T-cell (primary cell): ENCODE measurements at regions of chrX and their contacts with region 1.

Region 1: GRCh38 chrX:119706616-119707015 is 13.6 kb upstream of the SEPTIN6 start:
- DNase-seq: no peak
- ATAC-seq: no peak
- H3K4me3 ChIP-seq: no peak overlapping the region
- H3K4me3 Mint-ChIP-seq: no peak overlapping the region
- H3K27ac ChIP-seq: no peak overlapping the region
- H3K27ac Mint-ChIP-seq: no peak overlapping the region
- H3K4me1 ChIP-seq: no peaks in the 10 kb centered on the region
- H3K4me1 Mint-ChIP-seq: peaks cover 0 to 14% (median 2%) of the 10 kb centered on the region in 3 donors
- H3K27me3 ChIP-seq: no peaks in the 10 kb centered on the region
- H3K27me3 Mint-ChIP-seq: peaks cover 0 to 6% of the 10 kb centered on the region in 2 donors

Region 2: GRCh38 chrX:119638725-119639471 is 67.7 kb before region 1 on chrX:
- CTCF ChIA-PET with region 1: no interaction called
- POLR2A ChIA-PET with region 1: interaction called in 1 of 2 experiments, 12 read pairs
- DNase-seq: no peak
- ATAC-seq: peak in 2 of 4 experiments; percentile 11 to 23
- H3K4me3 ChIP-seq: no peak overlapping the region
- H3K4me3 Mint-ChIP-seq: no peak overlapping the region
- H3K27ac ChIP-seq: no peak overlapping the region
- H3K27ac Mint-ChIP-seq: peak overlapping the region; percentile 43 to 50
- H3K4me1 ChIP-seq: peaks cover 0 to 4% of the 10 kb centered on the region in 2 experiments
- H3K4me1 Mint-ChIP-seq: peaks cover 22 to 40% (median 32%) of the 10 kb centered on the region in 3 donors
- H3K27me3 ChIP-seq: no peaks in the 10 kb centered on the region
- H3K27me3 Mint-ChIP-seq: no peaks in the 10 kb centered on the region

Region 3: GRCh38 chrX:120428309-120428708 is 721.7 kb after region 1 on chrX:
- CTCF ChIA-PET with region 1: no interaction called
- POLR2A ChIA-PET with region 1: no interaction called
- DNase-seq: peak in 1 of 35 experiments; percentile 2
- ATAC-seq: no peak
- H3K4me3 ChIP-seq: no peak overlapping the region
- H3K4me3 Mint-ChIP-seq: no peak overlapping the region
- H3K27ac ChIP-seq: no peak overlapping the region
- H3K27ac Mint-ChIP-seq: peak overlapping the region in 1 of 2 donors; percentile 21
- H3K4me1 ChIP-seq: peaks cover 0 to 2% of the 10 kb centered on the region in 2 experiments
- H3K4me1 Mint-ChIP-seq: peaks cover 12 to 22% (median 14%) of the 10 kb centered on the region in 3 donors
- H3K27me3 ChIP-seq: no peaks in the 10 kb centered on the region
- H3K27me3 Mint-ChIP-seq: peaks cover 0 to 9% of the 10 kb centered on the region in 2 donors